Vagina (tissue), 2 donors: ENCODE measurements at regions of chr11 and their contacts with region 1.

Region 1: DNA sequence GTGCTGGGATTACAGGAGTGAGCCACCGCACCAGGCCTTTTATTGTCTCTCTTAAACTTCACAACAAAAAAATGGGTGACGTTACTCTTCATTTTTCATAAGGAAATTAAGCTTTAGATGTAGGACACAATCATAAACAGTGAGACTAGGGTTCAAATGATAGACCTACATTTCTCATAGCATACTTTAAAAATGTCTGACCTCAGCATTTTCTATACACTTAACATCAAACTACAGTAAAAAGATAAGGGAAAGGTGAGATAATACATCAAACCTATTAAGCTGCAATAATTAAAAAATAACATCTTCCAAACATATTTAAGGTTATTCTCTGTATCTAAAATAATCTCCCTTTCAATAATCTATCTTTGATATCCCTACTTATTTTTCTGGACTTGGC is 914.2 kb downstream of the FAM181B start:
- DNase-seq: no peak
- H3K4me3 ChIP-seq: no peak overlapping the region
- H3K27ac ChIP-seq: no peak overlapping the region
- H3K4me1 ChIP-seq: no peaks in the 10 kb centered on the region
- H3K27me3 ChIP-seq: no peaks in the 10 kb centered on the region
- CTCF ChIP-seq: no peak
- POLR2A ChIP-seq: no peak

Region 2: DNA sequence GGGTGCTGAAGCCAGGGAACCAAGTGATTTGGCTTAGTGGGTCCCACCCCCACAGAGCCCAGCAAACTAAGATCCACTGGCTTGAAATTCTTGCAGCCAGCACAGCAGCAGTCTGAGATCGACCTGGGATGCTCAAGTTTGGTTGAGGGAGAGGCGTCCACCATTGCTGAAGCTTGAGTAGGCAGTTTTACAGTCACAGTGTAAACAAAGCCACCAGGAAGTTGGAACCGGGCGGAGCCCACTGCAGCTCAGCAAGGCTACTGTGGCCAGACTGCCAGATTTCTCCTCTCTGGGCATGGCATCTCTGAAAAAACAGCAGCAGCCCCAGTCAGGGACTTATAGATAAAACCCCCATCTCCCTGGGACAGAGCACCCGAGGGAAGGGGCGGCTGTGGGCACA is 1954.6 kb before region 1 on chr11:
- intact Hi-C with region 1: loop called (anchors 5 kb)
- DNase-seq: no peak
- H3K4me3 ChIP-seq: no peak overlapping the region
- H3K27ac ChIP-seq: no peak overlapping the region
- H3K4me1 ChIP-seq: no peaks in the 10 kb centered on the region
- H3K27me3 ChIP-seq: no peaks in the 10 kb centered on the region
- CTCF ChIP-seq: no peak
- POLR2A ChIP-seq: no peak